Posterior cingulate gyrus (tissue), 11 donors: ENCODE measurements at regions of chr5 and their contacts with region 1.

Region 1: GRCh38 chr5:84741056-84741455 is 356.4 kb upstream of the EDIL3 start:
- DNase-seq: no peak

Region 2: DNA sequence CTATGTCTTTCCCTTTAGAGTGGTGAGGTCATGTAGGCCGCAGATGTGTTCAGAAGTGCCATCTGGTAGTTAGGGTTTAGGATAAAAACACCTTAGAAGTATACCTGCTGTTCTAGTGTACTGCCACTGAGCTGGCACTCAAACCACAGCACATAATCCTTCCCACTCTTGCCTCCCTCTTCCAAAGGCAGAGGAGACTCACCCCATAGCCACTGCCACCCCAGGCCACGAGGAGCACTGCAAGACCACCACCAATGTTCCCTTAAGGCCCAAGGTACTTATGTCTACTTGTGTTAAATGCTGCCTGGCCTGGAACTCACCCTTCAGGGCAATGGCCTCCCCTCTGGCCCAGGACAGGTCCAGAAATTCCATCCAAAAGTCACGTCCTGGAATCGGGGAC is 23.2 kb after region 1 on chr5:
- intact Hi-C with region 1: loop called (anchors 2 kb)
- DNase-seq: no peak

Region 3: GRCh38 chr5:86439593-86440110 is 1698.6 kb after region 1 on chr5:
- intact Hi-C with region 1: no loop called
- DNase-seq: no peak